A673 (cell line): ENCODE measurements at regions of chr13 and their contacts with region 1.

Region 1: DNA sequence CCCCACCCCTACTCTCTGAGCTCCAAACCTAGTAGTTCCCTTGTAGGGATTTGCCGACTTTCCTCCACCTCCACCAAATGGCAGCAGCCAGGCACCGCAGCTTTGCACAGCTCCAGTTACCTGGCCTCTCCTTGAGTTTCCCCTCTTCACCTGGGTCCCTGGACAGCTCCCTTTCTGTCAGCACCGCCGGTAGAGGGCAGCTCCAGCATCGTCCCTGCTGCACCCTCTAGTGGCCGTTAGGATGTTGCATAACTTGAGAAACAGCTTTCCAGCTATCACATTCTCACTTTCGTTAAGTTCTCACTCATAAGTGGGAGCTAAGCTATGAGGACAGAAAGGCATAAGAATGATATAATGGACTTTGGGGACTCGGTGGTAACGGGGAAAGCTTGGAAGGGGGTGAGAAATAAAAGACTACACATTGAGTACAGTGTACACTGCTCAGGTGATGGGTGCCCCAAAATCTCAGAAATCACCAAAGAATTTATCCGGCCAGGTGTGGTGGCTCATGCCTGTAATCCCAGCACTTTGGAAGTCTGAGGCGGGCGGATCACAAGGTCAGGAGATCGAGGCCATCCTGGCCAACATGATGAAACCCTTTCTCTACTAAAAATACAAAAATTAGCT is 60.4 kb upstream of the OLFM4 start:
- DNase-seq: peak; percentile 70
- H3K4me3 ChIP-seq: no peak overlapping the region
- H3K27ac ChIP-seq: no peak overlapping the region
- H3K4me1 ChIP-seq: no peaks in the 10 kb centered on the region
- H3K27me3 ChIP-seq: no peaks in the 10 kb centered on the region
- CTCF ChIP-seq: peak; percentile 95

Region 2: GRCh38 chr13:52638666-52639328 is 329.4 kb before region 1 on chr13:
- CTCF ChIA-PET with region 1: no interaction called
- POLR2A ChIA-PET with region 1: interaction called, 17 read pairs
- intact Hi-C with region 1: no loop called
- DNase-seq: no peak
- H3K4me3 ChIP-seq: no peak overlapping the region
- H3K27ac ChIP-seq: no peak overlapping the region
- H3K4me1 ChIP-seq: no peaks in the 10 kb centered on the region
- H3K27me3 ChIP-seq: no peaks in the 10 kb centered on the region
- CTCF ChIP-seq: no peak

Region 3: GRCh38 chr13:52665325-52665724 is 302.9 kb before region 1 on chr13:
- CTCF ChIA-PET with region 1: interaction called, 7 read pairs
- POLR2A ChIA-PET with region 1: no interaction called
- intact Hi-C with region 1: loop called (anchors 10 kb)
- DNase-seq: peak; percentile 34
- H3K4me3 ChIP-seq: no peak overlapping the region
- H3K27ac ChIP-seq: no peak overlapping the region
- H3K4me1 ChIP-seq: peaks cover 6% of the 10 kb centered on the region
- H3K27me3 ChIP-seq: no peaks in the 10 kb centered on the region
- CTCF ChIP-seq: peak; percentile 64

Region 4: GRCh38 chr13:52862358-52863206 is 105.6 kb before region 1 on chr13:
- CTCF ChIA-PET with region 1: interaction called, 3 read pairs
- POLR2A ChIA-PET with region 1: no interaction called
- intact Hi-C with region 1: loop called (anchors 5 kb)
- DNase-seq: peak; percentile 34
- H3K4me3 ChIP-seq: no peak overlapping the region
- H3K27ac ChIP-seq: no peak overlapping the region
- H3K4me1 ChIP-seq: no peaks in the 10 kb centered on the region
- H3K27me3 ChIP-seq: peaks cover 8% of the 10 kb centered on the region
- CTCF ChIP-seq: peak; percentile 89

Region 5: DNA sequence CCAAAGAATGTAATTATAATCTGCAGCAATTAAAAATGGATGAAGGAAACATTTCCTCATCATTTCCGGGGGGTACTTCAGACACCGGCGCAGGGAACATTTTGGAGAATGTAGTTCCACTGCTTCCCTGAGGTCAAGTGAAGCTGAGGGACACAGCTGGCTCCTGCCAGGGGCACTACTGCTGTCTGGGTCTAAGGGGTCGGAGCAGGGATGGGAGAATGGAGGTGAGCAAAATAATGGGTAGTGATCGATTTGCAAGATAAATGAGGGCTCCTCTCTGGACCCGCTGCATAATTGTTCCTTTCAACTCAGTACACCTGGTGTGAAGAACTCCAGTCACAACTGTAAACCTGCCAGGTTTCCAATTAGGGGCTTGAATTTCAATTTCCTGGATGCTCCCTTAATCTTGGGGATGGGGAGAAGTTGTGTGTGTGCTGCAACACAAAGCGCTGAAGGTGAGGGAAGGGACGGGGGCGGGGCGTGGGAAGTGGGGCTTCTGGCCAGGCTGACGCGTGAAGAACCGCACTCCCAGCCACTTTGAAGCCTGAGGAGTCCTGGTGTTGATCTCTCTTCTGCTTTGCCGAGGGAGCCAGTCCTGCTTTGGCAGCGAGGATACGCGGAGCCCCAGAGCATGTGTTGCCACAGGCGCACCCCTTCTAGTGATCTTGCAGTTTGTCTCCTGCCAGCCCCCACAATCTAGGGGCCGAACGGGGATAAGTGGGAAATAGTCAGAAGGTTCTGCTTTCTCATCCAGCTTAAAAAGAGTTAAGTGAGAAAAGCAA is 61.9 kb before region 1 on chr13:
- CTCF ChIA-PET with region 1: no interaction called
- POLR2A ChIA-PET with region 1: no interaction called
- intact Hi-C with region 1: no loop called
- DNase-seq: no peak
- H3K4me3 ChIP-seq: no peak overlapping the region
- H3K27ac ChIP-seq: no peak overlapping the region
- H3K4me1 ChIP-seq: no peaks in the 10 kb centered on the region
- H3K27me3 ChIP-seq: no peaks in the 10 kb centered on the region
- CTCF ChIP-seq: no peak

Region 6: GRCh38 chr13:53151336-53152056 is 183.3 kb after region 1 on chr13:
- CTCF ChIA-PET with region 1: interaction called, 20 read pairs
- POLR2A ChIA-PET with region 1: no interaction called
- intact Hi-C with region 1: loop called (anchors 5 kb)
- DNase-seq: peak; percentile 79
- H3K4me3 ChIP-seq: no peak overlapping the region
- H3K27ac ChIP-seq: no peak overlapping the region
- H3K4me1 ChIP-seq: peaks cover 7% of the 10 kb centered on the region
- H3K27me3 ChIP-seq: no peaks in the 10 kb centered on the region
- CTCF ChIP-seq: peak; percentile 95

Region 7: GRCh38 chr13:53200498-53201453 is 232.6 kb after region 1 on chr13:
- CTCF ChIA-PET with region 1: interaction called, 19 read pairs
- POLR2A ChIA-PET with region 1: no interaction called
- intact Hi-C with region 1: loop called (anchors 2 kb)
- DNase-seq: peak; percentile 61
- H3K4me3 ChIP-seq: no peak overlapping the region
- H3K27ac ChIP-seq: no peak overlapping the region
- H3K4me1 ChIP-seq: no peaks in the 10 kb centered on the region
- H3K27me3 ChIP-seq: no peaks in the 10 kb centered on the region
- CTCF ChIP-seq: peak; percentile 75

Region 8: GRCh38 chr13:54402495-54402894 is 1434.3 kb after region 1 on chr13:
- CTCF ChIA-PET with region 1: no interaction called
- POLR2A ChIA-PET with region 1: no interaction called
- intact Hi-C with region 1: no loop called
- DNase-seq: no peak
- H3K4me3 ChIP-seq: no peak overlapping the region
- H3K27ac ChIP-seq: no peak overlapping the region
- H3K4me1 ChIP-seq: no peaks in the 10 kb centered on the region
- H3K27me3 ChIP-seq: no peaks in the 10 kb centered on the region
- CTCF ChIP-seq: no peak